AG04449 (cell line): ENCODE measurements at regions of chr1 and their contacts with region 1.

Region 1: GRCh38 chr1:55506686-55507577 is 291.8 kb upstream of the USP24 start:
- DNase-seq: no peak
- H3K4me3 ChIP-seq: no peak overlapping the region
- CTCF ChIP-seq: no peak

Region 2: GRCh38 chr1:56584910-56585528 is 1078.1 kb after region 1 on chr1:
- CTCF ChIA-PET with region 1: interaction called, 12 read pairs
- POLR2A ChIA-PET with region 1: no interaction called
- DNase-seq: peak; percentile 33
- H3K4me3 ChIP-seq: no peak overlapping the region
- CTCF ChIP-seq: peak; percentile 54